Motor neuron (in vitro differentiated cells): ENCODE measurements at regions of chr20 and their contacts with region 1.

Region 1: DNA sequence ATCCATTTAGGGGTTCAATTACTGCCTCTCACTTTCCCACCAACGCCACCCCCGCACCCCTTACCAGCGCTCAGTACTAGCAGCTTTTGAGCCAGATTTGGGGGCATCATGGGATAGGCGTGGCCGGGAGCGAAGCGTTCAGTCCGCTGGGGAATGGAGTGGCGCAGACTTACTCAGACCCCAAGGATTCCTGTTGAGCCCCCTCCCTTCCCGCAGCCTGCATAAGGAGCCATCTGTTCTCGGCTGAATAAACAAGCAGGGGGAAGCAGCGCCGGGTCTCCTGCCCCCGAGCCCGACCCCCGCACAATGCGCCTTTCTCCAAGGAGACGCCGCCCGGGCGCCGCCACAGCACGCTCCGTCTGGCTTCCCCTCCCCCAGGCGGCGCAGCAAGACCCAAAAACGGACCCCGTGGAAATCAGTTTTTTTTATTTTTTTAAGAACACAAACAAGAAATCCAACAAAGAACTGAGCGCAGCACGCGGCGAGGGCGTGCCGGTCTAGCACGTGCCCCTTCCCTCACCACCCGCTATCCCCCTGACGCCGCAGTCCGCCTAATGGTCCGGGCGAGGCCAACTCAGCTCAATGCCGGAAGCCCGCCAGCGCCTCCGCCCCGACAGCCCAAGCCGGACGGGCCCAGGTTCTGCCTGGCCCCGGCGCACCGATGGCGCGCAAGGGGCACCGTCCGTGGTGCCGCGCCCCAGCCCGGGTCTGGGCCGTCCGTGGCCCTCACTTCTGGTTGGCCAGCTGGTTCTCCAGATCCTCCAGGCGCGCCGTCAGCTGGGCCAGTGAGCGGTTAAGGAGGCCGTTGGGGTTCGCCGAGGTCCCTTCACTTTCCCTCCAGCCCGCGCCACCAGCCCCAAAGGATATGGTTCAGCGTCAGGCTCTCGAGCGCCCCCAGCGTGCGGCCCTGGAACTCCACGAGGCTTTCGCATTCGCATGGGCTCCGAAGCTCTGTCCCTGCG is 13.3 kb upstream of the RBPJL start:
- ATAC-seq: peak; percentile 84 to 90 (median 88)
- H3K4me3 ChIP-seq: peak overlapping the region; percentile 32 to 50 (median 44)
- H3K27ac ChIP-seq: peak overlapping the region; percentile 34 to 52
- H3K4me1 ChIP-seq: peaks cover 0 to 3% of the 10 kb centered on the region in 2 donors

Region 2: DNA sequence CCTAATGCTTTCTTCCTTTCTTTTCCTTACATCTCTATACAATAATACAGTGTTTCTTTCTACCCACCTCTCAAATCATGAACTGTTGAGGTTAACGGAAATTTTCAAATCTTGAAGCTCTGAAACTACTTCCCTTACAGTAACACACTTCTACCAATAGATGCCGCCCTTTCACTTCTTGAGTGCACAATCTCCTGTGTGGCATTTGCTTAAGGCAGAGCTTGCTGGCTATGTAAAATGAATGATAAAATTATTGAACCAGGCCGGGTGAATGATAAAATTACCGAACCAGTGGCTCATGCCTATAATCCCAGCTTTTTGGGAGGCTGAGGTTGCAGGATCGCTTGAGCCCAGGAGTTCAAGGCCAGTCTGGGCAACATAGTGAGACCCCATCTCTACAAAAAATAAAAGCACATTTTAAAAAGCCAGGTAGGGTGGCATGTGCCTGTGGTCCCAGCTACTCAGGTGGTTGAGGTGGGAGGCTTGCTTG is 249.2 kb before region 1 on chr20:
- in situ Hi-C with region 1: loop called in 4 of 9 experiments (anchors 25 kb)
- ATAC-seq: peak in 6 of 8 experiments; percentile 42 to 90 (median 80)
- H3K4me3 ChIP-seq: no peak overlapping the region
- H3K27ac ChIP-seq: no peak overlapping the region
- H3K4me1 ChIP-seq: peaks cover 0 to 4% of the 10 kb centered on the region in 2 donors

Region 3: DNA sequence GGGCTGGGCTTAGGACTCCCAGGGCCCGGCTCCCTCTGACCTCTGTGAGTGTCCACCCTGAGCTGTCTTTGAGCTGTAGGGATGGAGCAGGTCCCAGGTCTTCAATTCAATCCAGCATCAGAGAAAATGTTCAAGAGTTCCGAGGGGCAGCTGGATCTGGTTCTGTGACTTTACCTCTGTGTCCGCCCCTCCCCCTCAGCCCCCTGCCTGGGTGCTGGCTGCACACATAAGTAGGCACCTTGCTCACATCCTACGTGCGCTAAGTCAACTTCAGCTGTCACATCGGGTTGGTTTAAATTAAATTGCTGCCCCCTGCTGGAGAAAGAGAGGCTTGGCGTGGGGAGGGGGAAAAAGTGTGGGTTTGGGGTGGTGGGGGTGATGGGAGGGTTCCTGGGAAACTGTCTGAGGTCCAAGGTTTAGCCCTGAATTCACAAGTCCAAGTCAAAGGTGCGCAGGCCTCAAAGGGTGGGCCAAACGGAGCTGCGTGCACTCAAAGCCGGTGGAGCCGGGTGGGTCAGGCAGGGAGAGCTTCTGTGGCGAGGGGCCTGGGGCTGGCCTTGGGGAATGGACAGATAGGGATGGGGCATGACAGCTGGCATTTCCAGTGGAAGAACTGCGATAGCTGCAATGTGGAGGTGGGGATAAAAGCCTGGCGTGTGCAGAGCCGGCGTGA is 181.4 kb before region 1 on chr20:
- in situ Hi-C with region 1: loop called in 1 of 9 experiments (anchors 25 kb)
- ATAC-seq: peak in 1 of 8 experiments; percentile 35
- H3K4me3 ChIP-seq: no peak overlapping the region
- H3K27ac ChIP-seq: no peak overlapping the region
- H3K4me1 ChIP-seq: no peaks in the 10 kb centered on the region

Region 4: DNA sequence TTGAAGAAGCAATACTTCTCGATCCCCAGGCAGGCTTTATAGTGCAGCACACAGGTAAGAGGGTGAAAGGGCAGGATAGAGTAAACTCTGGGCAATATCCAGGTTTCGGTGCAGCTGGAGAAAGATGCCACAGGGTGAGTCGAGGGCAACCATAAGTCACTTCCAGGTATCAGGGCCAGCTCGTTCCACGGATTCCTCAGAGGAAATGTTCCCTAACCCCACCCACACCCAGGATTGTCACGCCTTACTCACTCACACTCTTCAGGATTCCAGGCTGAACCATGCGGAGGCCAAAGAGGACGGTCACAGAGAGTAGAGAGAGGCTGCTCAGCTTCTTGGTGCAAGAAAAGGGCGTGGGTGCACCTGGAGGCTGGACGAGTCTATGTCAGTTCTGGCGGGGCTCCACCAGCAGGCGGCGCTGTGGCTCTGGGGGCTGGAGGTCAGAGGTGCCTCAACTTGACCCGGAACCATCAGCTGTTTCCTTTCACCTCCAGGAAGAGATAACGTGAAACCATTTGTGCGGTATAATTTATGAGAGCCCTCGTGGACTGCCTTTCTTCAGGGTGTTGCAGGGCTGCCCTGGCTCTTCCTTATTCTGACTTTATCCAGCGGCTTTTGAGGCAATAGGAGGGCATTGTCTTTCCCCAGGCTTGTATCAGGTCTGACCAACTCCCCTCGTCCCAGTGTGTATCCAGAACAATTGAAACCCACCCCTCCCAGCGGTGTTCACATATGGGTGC is 154.6 kb before region 1 on chr20:
- in situ Hi-C with region 1: loop called in 1 of 9 experiments (anchors 25 kb)
- ATAC-seq: peak in 3 of 8 experiments; percentile 80 to 93 (median 86)
- H3K4me3 ChIP-seq: no peak overlapping the region
- H3K27ac ChIP-seq: no peak overlapping the region
- H3K4me1 ChIP-seq: no peaks in the 10 kb centered on the region